ENCODE measurements at regions of chr3 and their contacts with region 1.

Region 1: GRCh38 chr3:141561426-141562034 is 74.7 kb downstream of the RASA2 start:
- DNase-seq: peak in 2 of 4 donors; percentile 52 to 77
- ATAC-seq: peak; percentile 88
- H3K4me3 ChIP-seq: no peak overlapping the region
- H3K27ac ChIP-seq: no peak overlapping the region
- H3K4me1 ChIP-seq: peaks cover 3 to 13% of the 10 kb centered on the region in 2 donors
- H3K27me3 ChIP-seq: no peaks in the 10 kb centered on the region
- CTCF ChIP-seq: peak; percentile 71 to 98

Region 2: DNA sequence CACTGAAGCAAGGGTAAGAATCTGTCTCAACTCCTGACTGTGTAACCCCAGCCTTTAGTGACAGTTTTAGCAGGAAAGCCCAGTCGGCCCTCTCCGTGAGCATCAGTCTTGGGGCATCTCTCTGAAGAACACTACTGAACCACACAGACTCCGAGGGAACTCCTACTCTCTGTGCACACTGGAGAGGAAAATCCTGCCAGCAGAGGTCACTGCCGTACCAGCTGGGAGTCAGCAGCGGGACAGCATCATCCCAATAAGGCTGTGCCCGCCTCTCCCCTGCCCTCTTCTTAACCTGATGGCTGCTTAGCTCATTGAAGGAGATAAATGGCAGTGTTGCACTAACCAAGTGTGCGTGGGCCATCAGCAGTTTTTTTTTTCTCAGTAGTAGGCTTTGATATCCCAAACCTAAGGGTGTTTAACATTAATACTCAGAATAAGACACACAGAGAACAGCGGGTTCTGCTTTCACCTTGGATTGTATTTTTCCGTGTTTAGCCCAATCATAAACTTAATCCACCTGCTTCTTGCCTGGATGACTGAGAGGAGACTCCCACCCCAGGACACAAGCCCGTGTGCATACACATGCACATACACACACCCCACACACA is 101.3 kb before region 1 on chr3:
- intact Hi-C with region 1: loop called in 1 of 2 experiments (anchors 5 kb)
- DNase-seq: peak; percentile 76 to 89 (median 87)
- ATAC-seq: peak; percentile 97
- H3K4me3 ChIP-seq: no peak overlapping the region
- H3K27ac ChIP-seq: no peak overlapping the region
- H3K4me1 ChIP-seq: peaks cover 5 to 6% of the 10 kb centered on the region in 2 donors
- H3K27me3 ChIP-seq: no peaks in the 10 kb centered on the region
- CTCF ChIP-seq: peak; percentile 77 to 83

Region 3: DNA sequence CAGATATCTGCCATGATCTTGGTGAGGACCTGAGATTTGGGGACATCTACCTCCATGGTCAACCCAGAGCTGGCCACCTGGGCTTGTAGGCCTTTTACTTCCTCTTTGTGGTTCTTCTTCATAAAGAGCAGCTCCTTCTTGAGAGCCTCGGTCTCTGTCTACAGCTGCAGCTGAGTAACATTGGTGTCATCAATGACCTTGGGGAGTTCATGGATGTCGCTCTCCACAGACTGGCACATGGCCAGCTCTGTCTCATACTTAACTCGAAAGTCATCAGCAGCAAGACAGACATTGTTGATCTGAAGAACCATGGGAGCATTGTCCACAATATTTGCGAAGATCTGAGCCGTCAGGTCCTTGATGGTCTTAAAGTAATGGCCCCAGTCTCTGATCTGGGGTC is 90.4 kb before region 1 on chr3:
- intact Hi-C with region 1: loop called in 1 of 2 experiments (anchors 5 kb)
- DNase-seq: no peak
- ATAC-seq: no peak
- H3K4me3 ChIP-seq: no peak overlapping the region
- H3K27ac ChIP-seq: no peak overlapping the region
- H3K4me1 ChIP-seq: peaks cover 0 to 17% of the 10 kb centered on the region in 2 donors
- H3K27me3 ChIP-seq: no peaks in the 10 kb centered on the region
- CTCF ChIP-seq: no peak

Region 4: DNA sequence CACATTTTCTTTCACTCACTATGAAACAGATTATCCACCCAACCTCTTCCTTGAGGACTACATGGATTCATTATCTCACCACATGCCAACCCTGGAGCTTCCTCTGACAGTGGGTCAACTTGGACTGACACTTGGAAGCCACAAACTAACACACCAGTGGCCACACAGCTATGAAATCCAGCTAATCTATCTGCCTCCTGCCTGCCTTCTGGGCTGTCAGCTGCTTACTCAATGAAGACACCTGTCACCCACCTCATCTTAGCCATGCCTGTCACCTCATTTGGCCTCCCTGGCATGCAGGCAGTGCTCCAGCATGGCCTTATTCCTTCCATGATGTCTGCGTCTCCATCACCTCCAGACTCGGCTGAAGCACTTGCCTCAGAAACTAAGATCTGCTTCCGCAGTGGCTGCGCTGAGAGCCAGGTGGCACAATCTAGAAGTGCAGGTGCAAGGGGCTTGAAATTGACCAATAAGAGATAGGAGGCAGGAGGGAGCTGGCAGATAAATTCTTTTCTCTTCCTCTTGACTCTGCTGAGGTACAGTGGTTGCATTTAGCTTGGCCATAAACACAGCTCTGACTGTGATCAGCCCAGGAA is 71.3 kb after region 1 on chr3:
- intact Hi-C with region 1: no loop called
- DNase-seq: no peak
- ATAC-seq: no peak
- H3K4me3 ChIP-seq: no peak overlapping the region
- H3K27ac ChIP-seq: no peak overlapping the region
- H3K4me1 ChIP-seq: no peaks in the 10 kb centered on the region
- H3K27me3 ChIP-seq: no peaks in the 10 kb centered on the region
- CTCF ChIP-seq: no peak

Measured in left lung (tissue), 14 donors.